Caco-2 (cell line): ENCODE measurements at regions of chr5 and their contacts with region 1.

Region 1: DNA sequence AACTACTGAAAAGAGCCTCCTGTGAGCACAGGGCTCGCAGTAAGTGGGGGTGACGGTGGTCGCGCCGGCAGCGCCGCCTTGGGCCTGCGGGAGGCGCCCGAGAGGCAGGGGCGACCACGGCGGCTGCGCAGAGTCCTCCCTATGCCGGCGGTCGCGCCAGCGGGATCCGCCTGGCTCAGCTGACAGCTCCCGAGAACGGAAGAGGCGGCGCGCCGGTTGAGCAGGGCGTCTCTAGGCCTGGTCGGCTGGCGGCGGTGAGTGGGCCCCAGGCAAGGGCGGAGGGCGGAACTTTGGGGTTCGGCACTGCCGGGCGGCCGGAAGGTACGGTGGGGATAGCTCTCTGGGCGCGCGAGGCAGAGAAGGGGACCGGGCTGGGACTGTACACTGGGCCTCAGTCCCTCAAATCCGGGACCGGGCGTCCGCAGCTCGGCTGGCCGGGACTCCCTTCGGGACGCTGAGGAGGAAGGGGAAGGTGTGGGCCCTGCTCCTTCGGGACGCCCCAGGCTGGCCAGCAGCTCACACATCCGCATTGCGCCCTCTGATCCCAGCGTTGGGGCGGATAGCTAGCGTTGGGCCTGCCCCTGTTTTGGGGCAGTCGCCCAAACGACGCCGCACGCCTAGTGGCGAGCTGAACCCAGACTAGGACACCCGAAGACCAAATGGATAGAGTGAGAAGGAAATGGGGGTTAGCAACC is at the start of gene RNF14:
- DNase-seq: peak; percentile 94 to 95
- H3K4me3 ChIP-seq: peak within 1 kb of the TSS; percentile 84
- H3K4me3 Mint-ChIP-seq: peak within 1 kb of the TSS; percentile 82
- H3K27ac Mint-ChIP-seq: peak within 1 kb of the TSS; percentile 88
- H3K4me1 ChIP-seq: peaks cover 23% of the 10 kb centered on the region
- H3K4me1 Mint-ChIP-seq: peaks cover 6% of the 10 kb centered on the region
- H3K27me3 ChIP-seq: no peaks in the 10 kb centered on the region
- H3K27me3 Mint-ChIP-seq: no peaks in the 10 kb centered on the region
- CTCF ChIP-seq: peak; percentile 89 to 94
- total RNA-seq, gene RNF14: 35.1 and 38.7 TPM in 2 replicates

Region 2: DNA sequence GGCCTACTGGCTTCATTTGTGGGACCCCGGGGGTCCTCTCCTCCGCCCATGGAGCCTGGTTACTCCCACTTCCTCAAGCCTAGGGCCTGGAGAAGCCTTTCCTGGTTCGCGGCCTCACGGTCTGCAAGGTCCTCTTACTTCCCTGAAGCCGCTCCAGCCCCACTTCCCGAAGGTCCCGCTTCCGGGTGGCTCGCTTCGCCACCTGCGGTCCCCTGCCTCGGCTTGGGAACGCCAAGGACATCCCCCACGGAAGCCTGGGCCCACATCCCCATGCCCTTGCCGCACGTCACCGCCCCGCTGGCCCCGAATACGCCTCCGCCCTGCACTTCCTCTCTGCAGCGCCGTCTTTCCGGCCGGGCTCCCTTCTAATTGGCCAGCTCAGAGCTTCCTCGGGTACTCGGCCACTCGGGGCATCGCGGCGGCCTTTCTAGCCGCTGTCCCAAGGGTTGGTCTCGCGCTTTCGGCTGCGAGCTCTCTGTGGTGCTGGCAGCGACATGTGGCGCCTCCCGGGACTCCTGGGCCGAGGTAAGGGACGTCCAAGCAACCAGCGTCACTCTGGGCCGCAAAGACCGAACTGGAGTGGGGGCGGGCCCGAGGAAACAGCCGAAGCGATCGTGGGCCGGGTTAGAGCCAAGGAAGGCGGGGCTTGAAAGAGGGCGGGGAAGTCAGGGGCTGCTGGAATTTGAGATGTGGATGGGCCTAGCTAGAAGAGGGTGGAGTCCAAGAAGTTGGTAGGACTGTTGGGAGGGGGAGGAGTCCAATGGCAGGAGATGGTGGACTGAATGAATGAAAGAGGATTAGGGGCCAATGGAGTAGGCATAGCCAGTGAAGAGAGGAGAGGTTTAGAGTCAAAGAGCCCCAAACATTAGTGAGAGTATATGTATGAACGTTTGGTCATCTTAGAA is 45.4 kb before region 1 on chr5 and contains the start of gene DELE1:
- CTCF ChIA-PET with region 1: interaction called, 6 read pairs
- POLR2A ChIA-PET with region 1: interaction called, 12 read pairs
- intact Hi-C with region 1: loop called (anchors 2 kb)
- DNase-seq: peak; percentile 93 to 95
- H3K4me3 ChIP-seq: peak within 1 kb of the TSS; percentile 51
- H3K4me3 Mint-ChIP-seq: peak within 1 kb of the TSS; percentile 81
- H3K27ac Mint-ChIP-seq: peak within 1 kb of the TSS; percentile 96
- H3K4me1 ChIP-seq: peaks cover 16% of the 10 kb centered on the region
- H3K4me1 Mint-ChIP-seq: peaks cover 14% of the 10 kb centered on the region
- H3K27me3 ChIP-seq: no peaks in the 10 kb centered on the region
- H3K27me3 Mint-ChIP-seq: no peaks in the 10 kb centered on the region
- CTCF ChIP-seq: no peak
- total RNA-seq, gene DELE1: 67.6 and 78.6 TPM in 2 replicates

Region 3: GRCh38 chr5:141992349-141992963 is 23.4 kb after region 1 on chr5:
- CTCF ChIA-PET with region 1: interaction called, 10 read pairs
- POLR2A ChIA-PET with region 1: no interaction called
- intact Hi-C with region 1: no loop called
- DNase-seq: peak; percentile 69 to 72
- H3K4me3 ChIP-seq: no peak overlapping the region
- H3K4me3 Mint-ChIP-seq: no peak overlapping the region
- H3K27ac Mint-ChIP-seq: no peak overlapping the region
- H3K4me1 ChIP-seq: no peaks in the 10 kb centered on the region
- H3K4me1 Mint-ChIP-seq: no peaks in the 10 kb centered on the region
- H3K27me3 ChIP-seq: no peaks in the 10 kb centered on the region
- H3K27me3 Mint-ChIP-seq: no peaks in the 10 kb centered on the region
- CTCF ChIP-seq: peak; percentile 65 to 70

Region 4: GRCh38 chr5:142186857-142187594 is 218.0 kb after region 1 on chr5:
- CTCF ChIA-PET with region 1: no interaction called
- POLR2A ChIA-PET with region 1: no interaction called
- intact Hi-C with region 1: no loop called
- DNase-seq: peak; percentile 72 to 79
- H3K4me3 ChIP-seq: no peak overlapping the region
- H3K4me3 Mint-ChIP-seq: no peak overlapping the region
- H3K27ac Mint-ChIP-seq: peak overlapping the region; percentile 75
- H3K4me1 ChIP-seq: peaks cover 44% of the 10 kb centered on the region
- H3K4me1 Mint-ChIP-seq: peaks cover 32% of the 10 kb centered on the region
- H3K27me3 ChIP-seq: no peaks in the 10 kb centered on the region
- H3K27me3 Mint-ChIP-seq: no peaks in the 10 kb centered on the region
- CTCF ChIP-seq: no peak